GM23248 (cell line): ENCODE measurements at regions of chr14 and their contacts with region 1.

Region 1: GRCh38 chr14:89973234-89973823 is 17.6 kb downstream of the TDP1 start:
- DNase-seq: peak; percentile 76
- H3K4me3 ChIP-seq: no peak overlapping the region
- H3K27ac ChIP-seq: no peak overlapping the region
- H3K4me1 ChIP-seq: no peaks in the 10 kb centered on the region
- H3K27me3 ChIP-seq: no peaks in the 10 kb centered on the region

Region 2: DNA sequence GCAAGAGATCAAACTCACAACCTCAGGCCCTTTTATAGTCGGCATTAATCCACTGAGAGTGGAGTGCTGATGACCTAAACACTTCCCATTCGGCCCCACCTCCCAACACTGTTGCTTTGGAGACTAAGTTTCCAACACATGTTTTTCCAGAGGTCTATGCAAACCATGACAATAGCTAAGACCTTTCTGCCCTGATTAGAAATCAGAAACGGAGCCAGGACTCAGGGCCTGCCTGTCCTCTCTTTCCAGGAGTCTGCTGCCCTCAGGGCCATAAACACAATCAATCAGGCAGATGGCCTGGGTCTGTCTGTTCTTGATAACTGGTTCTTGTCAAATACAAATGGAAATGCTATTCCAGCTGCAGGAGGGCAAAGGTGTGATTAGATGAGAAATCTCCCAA is 185.8 kb after region 1 on chr14:
- in situ Hi-C with region 1: no loop called
- DNase-seq: no peak
- H3K4me3 ChIP-seq: no peak overlapping the region
- H3K27ac ChIP-seq: no peak overlapping the region
- H3K4me1 ChIP-seq: no peaks in the 10 kb centered on the region
- H3K27me3 ChIP-seq: peaks cover 39% of the 10 kb centered on the region

Region 3: DNA sequence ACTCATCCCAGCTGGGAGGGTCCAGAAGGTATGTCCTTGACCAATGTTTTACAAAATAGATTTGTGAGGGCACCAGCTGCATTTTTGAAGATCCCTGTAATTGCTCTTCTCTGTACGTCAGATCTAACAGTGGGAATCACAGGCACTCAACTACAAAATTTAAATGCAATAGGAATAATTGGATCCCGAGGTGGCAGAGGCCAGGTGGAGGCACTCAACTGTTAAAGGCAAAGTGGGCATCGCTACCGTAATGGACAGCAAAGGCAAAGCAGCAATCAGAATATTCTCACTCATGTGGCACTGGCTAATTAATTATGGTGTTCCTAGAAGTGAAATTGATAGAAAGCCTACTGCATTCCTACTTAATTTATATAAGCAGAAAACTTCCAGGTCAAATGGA is 255.1 kb after region 1 on chr14:
- in situ Hi-C with region 1: loop called (anchors 10 kb)
- DNase-seq: no peak
- H3K4me3 ChIP-seq: no peak overlapping the region
- H3K27ac ChIP-seq: no peak overlapping the region
- H3K4me1 ChIP-seq: no peaks in the 10 kb centered on the region
- H3K27me3 ChIP-seq: peaks cover 5% of the 10 kb centered on the region; the same call in 1 of the 2 replicates